Psoas muscle (tissue), 8 donors: ENCODE measurements at regions of chr14 and their contacts with region 1.

Region 1: GRCh38 chr14:59576332-59577294 is at the start of gene CCDC175:
- DNase-seq: peak; percentile 74 to 89
- ATAC-seq: peak; percentile 90 to 99 (median 94)
- H3K4me3 ChIP-seq: peak within 1 kb of the TSS; percentile 61
- H3K27ac ChIP-seq: no peak within 1 kb of the TSS
- H3K4me1 ChIP-seq: no peaks in the 10 kb centered on the region
- H3K27me3 ChIP-seq: no peaks in the 10 kb centered on the region
- CTCF ChIP-seq: peak; percentile 66
- total RNA-seq, gene CCDC175: not detected

Region 2: GRCh38 chr14:59507063-59507780 is 69.4 kb before region 1 on chr14:
- intact Hi-C with region 1: loop called (anchors 2 to 5 kb)
- DNase-seq: peak in 1 of 2 donors; percentile 23
- ATAC-seq: peak; percentile 61 to 92 (median 81)
- H3K4me3 ChIP-seq: no peak overlapping the region
- H3K27ac ChIP-seq: no peak overlapping the region
- H3K4me1 ChIP-seq: no peaks in the 10 kb centered on the region
- H3K27me3 ChIP-seq: no peaks in the 10 kb centered on the region
- CTCF ChIP-seq: peak; percentile 76